ENCODE measurements at regions of chr10 and their contacts with region 1.

Region 1: DNA sequence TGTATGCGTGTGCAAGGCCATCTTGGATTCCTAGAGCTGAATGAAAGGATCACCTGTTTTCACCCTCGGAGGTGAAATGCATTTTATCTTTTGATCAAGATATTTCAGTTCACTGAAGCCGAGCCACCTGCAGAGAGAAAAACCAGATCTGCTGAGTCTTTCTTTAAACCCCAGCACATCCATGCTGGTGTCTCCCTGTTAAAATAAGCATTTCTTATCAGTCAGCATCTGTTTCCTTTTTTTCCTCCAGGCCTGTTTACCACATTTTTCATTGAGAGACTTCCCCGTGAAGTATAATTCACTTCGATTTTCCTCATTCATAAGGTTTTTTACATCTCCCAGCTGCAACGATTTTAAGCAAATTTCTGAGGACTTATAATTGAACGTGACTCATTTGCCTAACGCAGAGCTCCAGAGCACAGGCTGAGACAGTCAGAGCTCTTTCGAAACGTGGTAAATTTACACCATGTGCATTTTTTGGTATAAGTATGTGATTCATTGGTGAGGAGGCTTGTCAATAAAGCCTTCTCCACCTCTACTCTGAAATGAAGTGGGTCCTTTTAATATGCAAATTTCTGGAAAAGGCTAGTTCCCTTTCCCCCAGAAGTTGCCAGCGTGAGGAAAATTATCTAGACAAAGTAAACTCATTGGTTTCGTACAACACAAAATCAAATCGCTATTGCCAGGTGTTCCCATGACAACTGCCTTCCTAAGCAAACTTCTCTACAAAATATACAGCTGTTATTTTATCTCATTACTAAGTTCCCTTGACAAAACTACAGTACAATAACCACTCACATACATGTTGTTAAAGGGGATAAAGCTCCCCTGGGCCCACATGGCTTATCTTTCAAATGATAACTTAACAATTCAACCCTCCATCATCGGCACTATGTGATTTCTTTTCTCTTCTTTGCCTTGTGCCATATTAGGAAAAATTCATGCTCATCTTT is 374.8 kb upstream of the AKR1E2 start:
- DNase-seq: no peak
- ATAC-seq: no peak
- H3K4me3 ChIP-seq: no peak overlapping the region
- H3K27ac ChIP-seq: no peak overlapping the region
- H3K4me1 ChIP-seq: no peaks in the 10 kb centered on the region
- H3K27me3 ChIP-seq: no peaks in the 10 kb centered on the region
- CTCF ChIP-seq: no peak
- POLR2A ChIP-seq: no peak

Region 2: DNA sequence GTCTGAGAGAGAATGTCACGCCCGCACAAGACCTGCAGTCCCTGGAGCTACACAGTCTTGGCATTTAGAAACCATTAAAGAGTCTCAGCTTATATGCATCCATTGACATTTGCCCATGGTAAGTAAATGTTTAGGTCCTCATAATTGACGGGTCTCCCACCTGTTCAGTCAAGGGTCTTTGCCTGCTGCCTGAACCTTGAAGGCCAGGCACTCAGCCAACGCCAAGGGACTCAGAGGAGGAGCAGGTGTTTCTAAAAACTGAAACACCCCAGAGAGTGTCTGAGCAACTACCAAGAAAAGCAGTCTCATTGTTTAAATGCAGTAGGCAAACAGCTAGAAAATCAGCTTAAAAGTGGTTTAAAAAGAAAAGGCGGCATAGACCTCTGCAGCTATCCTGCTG is 110.1 kb after region 1 on chr10:
- in situ Hi-C with region 1: loop called in 1 of 4 experiments (anchors 25 kb)
- intact Hi-C with region 1: no loop called
- DNase-seq: no peak
- ATAC-seq: no peak
- H3K4me3 ChIP-seq: no peak overlapping the region
- H3K27ac ChIP-seq: no peak overlapping the region
- H3K4me1 ChIP-seq: no peaks in the 10 kb centered on the region
- H3K27me3 ChIP-seq: no peaks in the 10 kb centered on the region
- CTCF ChIP-seq: no peak
- POLR2A ChIP-seq: no peak